OCI-LY7 (cell line): ENCODE measurements at regions of chr1 and their contacts with region 1.

Region 1: GRCh38 chr1:108897865-108898720 is 21.3 kb downstream of the GPSM2 start:
- DNase-seq: peak; percentile 74
- H3K4me3 ChIP-seq: no peak overlapping the region
- H3K27ac ChIP-seq: no peak overlapping the region
- H3K4me1 ChIP-seq: no peaks in the 10 kb centered on the region
- CTCF ChIP-seq: peak; percentile 93

Region 2: GRCh38 chr1:108691942-108692723 is 206.0 kb before region 1 on chr1 and contains the start of gene PRPF38B:
- CTCF ChIA-PET with region 1: no interaction called
- POLR2A ChIA-PET with region 1: interaction called, 3 read pairs
- intact Hi-C with region 1: loop called (anchors 5 kb)
- DNase-seq: peak; percentile 94
- H3K4me3 ChIP-seq: peak within 1 kb of the TSS; percentile 97
- H3K27ac ChIP-seq: peak within 1 kb of the TSS; percentile 83
- H3K4me1 ChIP-seq: peaks cover 28% of the 10 kb centered on the region
- CTCF ChIP-seq: no peak
- total RNA-seq, gene PRPF38B: 37.7 and 47.4 TPM in 2 replicates

Region 3: DNA sequence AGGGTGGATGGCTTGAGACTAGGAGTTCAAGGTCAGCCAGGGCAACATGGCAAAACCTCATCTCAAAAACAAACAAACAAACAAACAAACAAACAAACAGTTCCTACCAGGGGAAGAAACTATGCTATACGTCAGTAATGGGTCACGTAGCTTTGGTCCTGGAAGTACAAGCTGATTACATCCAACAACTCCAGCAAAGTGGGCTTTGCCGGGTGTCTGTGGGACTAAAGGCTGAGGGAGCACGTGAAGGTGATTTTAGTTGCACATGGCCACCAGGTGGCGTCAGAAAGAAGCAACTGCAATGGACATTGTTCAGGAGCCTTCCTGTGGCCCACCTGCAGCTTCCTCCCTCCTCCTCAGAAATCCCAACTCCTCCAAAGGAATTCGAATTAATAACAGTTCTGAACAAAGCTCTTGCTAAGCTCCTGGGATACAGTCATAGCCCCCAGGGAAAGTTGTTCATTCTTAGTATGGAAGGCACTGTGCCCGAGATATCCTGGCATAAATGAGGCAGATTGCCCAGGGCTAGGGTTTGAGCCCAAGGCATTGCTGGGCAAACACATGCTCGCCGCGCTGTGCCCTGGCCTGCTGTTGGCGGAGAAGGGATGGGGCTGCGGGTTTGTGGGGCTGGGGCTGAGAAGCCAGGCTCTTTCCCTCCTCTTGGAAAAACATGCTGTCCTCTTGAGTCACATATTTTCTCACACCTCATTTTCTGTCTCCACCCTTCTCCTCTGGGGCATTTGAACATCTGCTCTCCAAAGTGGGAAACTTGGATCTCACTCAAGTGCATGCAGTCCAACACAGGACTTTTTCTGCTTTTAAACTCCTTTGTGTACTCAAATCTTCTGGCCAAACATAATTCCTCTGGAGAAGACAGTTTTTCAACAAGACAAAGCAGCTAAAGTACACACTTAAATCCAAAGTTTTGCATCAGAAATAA is 69.8 kb before region 1 on chr1:
- CTCF ChIA-PET with region 1: no interaction called
- POLR2A ChIA-PET with region 1: interaction called, 9 read pairs
- intact Hi-C with region 1: loop called (anchors 1 kb)
- DNase-seq: peak; percentile 79
- H3K4me3 ChIP-seq: no peak overlapping the region
- H3K27ac ChIP-seq: no peak overlapping the region
- H3K4me1 ChIP-seq: no peaks in the 10 kb centered on the region
- CTCF ChIP-seq: peak; percentile 92

Region 4: GRCh38 chr1:108884968-108885367 is 13.1 kb before region 1 on chr1:
- CTCF ChIA-PET with region 1: no interaction called
- POLR2A ChIA-PET with region 1: interaction called, 12 read pairs
- intact Hi-C with region 1: no loop called
- DNase-seq: no peak
- H3K4me3 ChIP-seq: no peak overlapping the region
- H3K27ac ChIP-seq: no peak overlapping the region
- H3K4me1 ChIP-seq: no peaks in the 10 kb centered on the region
- CTCF ChIP-seq: no peak

Region 5: DNA sequence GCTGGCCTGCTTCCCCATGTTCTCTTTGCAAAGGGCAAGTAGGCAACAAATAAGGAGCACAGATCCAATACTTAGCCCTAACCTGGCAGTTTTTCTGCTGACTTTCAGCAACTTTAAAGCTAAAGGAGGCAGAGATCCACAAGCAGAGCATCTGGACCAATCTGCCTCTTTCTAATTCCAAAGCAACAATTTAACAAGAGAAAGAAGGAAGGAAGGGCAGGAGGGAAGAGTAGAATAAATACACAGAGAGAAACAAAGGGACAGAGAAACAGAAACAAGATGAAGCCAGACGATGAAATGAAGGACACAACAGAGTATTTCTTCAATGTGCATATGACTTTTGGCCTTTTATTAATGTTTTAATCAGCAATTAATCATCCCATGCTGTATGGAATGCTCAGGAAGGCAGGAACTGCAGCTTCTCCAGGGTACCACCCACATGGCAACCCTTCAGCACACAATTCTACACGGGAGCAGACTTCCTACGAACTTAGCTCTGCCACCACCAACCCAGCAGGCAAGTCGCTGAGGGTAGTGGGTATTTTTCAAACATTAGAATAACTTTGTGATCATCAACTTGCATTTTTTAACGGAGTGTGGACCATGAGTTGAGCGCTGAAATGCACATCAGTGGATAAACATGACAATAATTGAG is 49.9 kb after region 1 on chr1:
- CTCF ChIA-PET with region 1: no interaction called
- POLR2A ChIA-PET with region 1: no interaction called
- intact Hi-C with region 1: loop called (anchors 5 kb)
- DNase-seq: no peak
- H3K4me3 ChIP-seq: no peak overlapping the region
- H3K27ac ChIP-seq: no peak overlapping the region
- H3K4me1 ChIP-seq: no peaks in the 10 kb centered on the region
- CTCF ChIP-seq: no peak